A673 (cell line): ENCODE measurements at regions of chr18 and their contacts with region 1.

Region 1: DNA sequence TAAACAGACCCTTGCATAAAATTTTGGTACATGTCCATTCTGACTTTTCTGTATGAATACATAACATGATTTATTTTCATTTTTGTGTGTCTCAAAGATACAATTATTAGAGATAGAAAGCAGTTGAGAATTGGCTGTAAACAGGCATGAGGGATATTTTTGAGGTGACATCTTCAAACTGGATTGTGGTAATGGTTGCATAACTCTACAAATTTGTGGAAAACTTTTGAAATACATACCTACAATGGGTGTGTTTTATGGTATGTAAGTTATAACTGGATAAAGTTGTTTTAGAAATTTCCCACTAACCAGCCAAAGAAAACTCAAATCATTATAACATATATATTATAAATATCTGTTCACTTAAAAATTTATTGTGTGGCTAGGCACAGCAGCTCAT is 39.6 kb downstream of the GREB1L start:
- DNase-seq: no peak
- H3K4me3 ChIP-seq: no peak overlapping the region
- H3K27ac ChIP-seq: no peak overlapping the region
- H3K4me1 ChIP-seq: no peaks in the 10 kb centered on the region
- H3K27me3 ChIP-seq: peaks cover 18% of the 10 kb centered on the region
- CTCF ChIP-seq: no peak

Region 2: GRCh38 chr18:21298351-21298750 is 16.7 kb after region 1 on chr18:
- CTCF ChIA-PET with region 1: no interaction called
- POLR2A ChIA-PET with region 1: no interaction called
- intact Hi-C with region 1: loop called (anchors 2 kb)
- DNase-seq: no peak
- H3K4me3 ChIP-seq: no peak overlapping the region
- H3K27ac ChIP-seq: no peak overlapping the region
- H3K4me1 ChIP-seq: no peaks in the 10 kb centered on the region
- H3K27me3 ChIP-seq: peaks cover 24% of the 10 kb centered on the region
- CTCF ChIP-seq: no peak